ENCODE measurements at regions of chr2 and their contacts with region 1.

Region 1: GRCh38 chr2:30711646-30712085 is 95.6 kb downstream of the CAPN13 start:
- DNase-seq: peak; percentile 77
- H3K4me3 ChIP-seq: no peak overlapping the region
- H3K27ac ChIP-seq: no peak overlapping the region
- H3K4me1 ChIP-seq: peaks cover 12% of the 10 kb centered on the region
- H3K27me3 ChIP-seq: no peaks in the 10 kb centered on the region
- CTCF ChIP-seq: no peak

Region 2: GRCh38 chr2:30165050-30165520 is 546.6 kb before region 1 on chr2:
- intact Hi-C with region 1: loop called (anchors 5 kb)
- DNase-seq: no peak
- H3K4me3 ChIP-seq: no peak overlapping the region
- H3K27ac ChIP-seq: no peak overlapping the region
- H3K4me1 ChIP-seq: peaks cover 24% of the 10 kb centered on the region
- H3K27me3 ChIP-seq: no peaks in the 10 kb centered on the region
- CTCF ChIP-seq: peak; percentile 92

Region 3: GRCh38 chr2:30208452-30208851 is 503.2 kb before region 1 on chr2:
- intact Hi-C with region 1: loop called (anchors 2 kb)
- DNase-seq: peak; percentile 53
- H3K4me3 ChIP-seq: no peak overlapping the region
- H3K27ac ChIP-seq: peak overlapping the region; percentile 16
- H3K4me1 ChIP-seq: peaks cover 11% of the 10 kb centered on the region
- H3K27me3 ChIP-seq: no peaks in the 10 kb centered on the region
- CTCF ChIP-seq: peak; percentile 94

Region 4: GRCh38 chr2:30455114-30455738 is 256.4 kb before region 1 on chr2:
- intact Hi-C with region 1: loop called (anchors 10 kb)
- DNase-seq: no peak
- H3K4me3 ChIP-seq: no peak overlapping the region
- H3K27ac ChIP-seq: peak overlapping the region; percentile 21
- H3K4me1 ChIP-seq: peaks cover 75% of the 10 kb centered on the region
- H3K27me3 ChIP-seq: no peaks in the 10 kb centered on the region
- CTCF ChIP-seq: no peak

Region 5: GRCh38 chr2:31170071-31170698 is 458.5 kb after region 1 on chr2:
- intact Hi-C with region 1: loop called (anchors 5 kb)
- DNase-seq: peak; percentile 36
- H3K4me3 ChIP-seq: no peak overlapping the region
- H3K27ac ChIP-seq: no peak overlapping the region
- H3K4me1 ChIP-seq: no peaks in the 10 kb centered on the region
- H3K27me3 ChIP-seq: peaks cover 4% of the 10 kb centered on the region
- CTCF ChIP-seq: peak; percentile 93

Region 6: GRCh38 chr2:31333527-31334183 is 622.0 kb after region 1 on chr2:
- intact Hi-C with region 1: loop called (anchors 10 kb)
- DNase-seq: peak; percentile 72
- H3K4me3 ChIP-seq: no peak overlapping the region
- H3K27ac ChIP-seq: no peak overlapping the region
- H3K4me1 ChIP-seq: peaks cover 16% of the 10 kb centered on the region
- H3K27me3 ChIP-seq: peaks cover 4% of the 10 kb centered on the region
- CTCF ChIP-seq: peak; percentile 96

Region 7: GRCh38 chr2:31523871-31524492 is 812.3 kb after region 1 on chr2:
- intact Hi-C with region 1: loop called (anchors 10 kb)
- DNase-seq: no peak
- H3K4me3 ChIP-seq: no peak overlapping the region
- H3K27ac ChIP-seq: no peak overlapping the region
- H3K4me1 ChIP-seq: no peaks in the 10 kb centered on the region
- H3K27me3 ChIP-seq: peaks cover 38% of the 10 kb centered on the region
- CTCF ChIP-seq: peak; percentile 74